A549 (cell line): ENCODE measurements at regions of chr14 and their contacts with region 1.

Region 1: GRCh38 chr14:73913256-73913655 is 26.6 kb downstream of the ZNF410 start:
- DNase-seq: peak in 1 of 2 experiments; percentile 38
- ATAC-seq: no peak
- H3K4me3 ChIP-seq: no peak overlapping the region
- H3K27ac ChIP-seq: no peak overlapping the region
- H3K4me1 ChIP-seq: 0 out of 3 replicates have a peak, but pooled peaks cover 6% of the 10 kb centered on the region
- CTCF ChIP-seq: no peak
- EP300 ChIP-seq: no peak
- POLR2A ChIP-seq: no peak
- RAD21 ChIP-seq: no peak

Region 2: DNA sequence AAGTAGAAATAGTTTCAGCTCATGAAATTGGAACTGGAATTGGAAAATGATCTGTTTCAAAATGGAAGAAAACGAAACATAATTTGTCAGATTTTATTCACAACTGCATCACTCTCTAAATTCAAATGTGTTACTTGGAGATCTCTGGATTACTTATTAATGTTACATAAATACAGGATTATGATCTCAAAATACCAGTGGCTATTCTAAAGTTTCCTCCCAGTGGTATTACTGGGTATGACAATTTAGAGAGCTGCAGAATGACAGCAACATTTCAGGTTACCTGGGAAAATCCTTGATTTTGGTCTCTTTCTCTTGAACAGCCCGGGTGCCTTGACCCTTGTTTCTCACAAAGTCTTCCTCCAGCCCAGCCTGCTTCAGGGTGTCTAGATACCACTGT is 22.4 kb after region 1 on chr14:
- CTCF ChIA-PET with region 1: interaction called, 10 read pairs
- POLR2A ChIA-PET with region 1: no interaction called
- DNase-seq: peak; percentile 33 to 75
- ATAC-seq: peak; percentile 69 to 80; a peak in 4 of 6 replicates
- H3K4me3 ChIP-seq: no peak overlapping the region
- H3K27ac ChIP-seq: no peak overlapping the region
- H3K4me1 ChIP-seq: peaks cover 3% of the 10 kb centered on the region; the same call in 2 of the 3 replicates
- CTCF ChIP-seq: no peak; the same call in 2 of the 3 replicates
- EP300 ChIP-seq: no peak
- POLR2A ChIP-seq: no peak
- RAD21 ChIP-seq: no peak